IMR-90 (cell line): ENCODE measurements at regions of chr20 and their contacts with region 1.

Region 1: DNA sequence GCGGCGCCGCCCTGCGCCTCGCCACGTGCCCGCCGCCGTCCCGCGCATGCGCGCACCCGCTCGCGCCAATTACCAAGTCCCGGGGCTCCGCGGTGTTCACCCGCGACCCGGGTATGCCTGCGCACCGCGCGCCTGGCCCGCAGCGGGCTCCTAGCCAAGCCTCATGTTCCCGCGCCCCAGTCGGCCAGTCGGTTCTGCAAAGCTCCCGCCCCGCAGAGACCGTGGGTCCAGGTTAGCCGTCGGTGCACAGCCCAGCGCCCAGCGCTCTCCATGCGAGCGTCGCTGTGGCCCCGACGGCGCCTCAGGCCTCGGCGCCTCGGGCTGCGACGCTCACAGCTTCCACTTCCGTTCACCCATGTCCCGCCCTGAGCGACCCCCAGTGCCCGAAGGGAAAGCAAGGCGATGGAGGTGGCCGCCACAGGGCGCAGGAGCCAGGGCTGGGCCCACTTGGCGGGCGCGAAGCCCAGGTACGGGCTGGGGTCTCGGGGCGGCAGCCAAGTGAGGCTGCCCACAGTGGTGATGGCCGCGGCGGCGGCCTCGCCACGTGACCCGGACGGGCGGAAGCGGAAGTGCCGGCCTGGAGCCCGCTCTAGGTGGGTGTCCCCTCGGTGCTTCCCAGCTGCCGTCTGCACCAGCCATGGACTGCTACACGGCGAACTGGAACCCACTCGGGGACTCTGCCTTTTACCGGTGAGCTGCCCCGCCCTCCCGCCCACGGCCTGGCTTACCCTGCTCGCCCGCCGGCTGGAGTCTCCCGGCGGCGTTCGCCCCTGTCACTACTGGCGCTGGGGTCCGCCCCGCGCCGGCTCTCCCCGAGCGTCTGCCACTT is at the starts of genes PCED1A and VPS16:
- DNase-seq: peak; percentile 85
- ATAC-seq: peak; percentile 96
- H3K4me3 ChIP-seq: peak within 1 kb of the TSS; percentile 92
- H3K27ac ChIP-seq: peak within 1 kb of the TSS; percentile 93
- H3K4me1 ChIP-seq: peaks cover 8% of the 10 kb centered on the region
- H3K27me3 ChIP-seq: no peaks in the 10 kb centered on the region
- CTCF ChIP-seq: no peak
- POLR2A ChIP-seq: no peak
- RAD21 ChIP-seq: no peak
- total RNA-seq, gene PCED1A: 8.1 and 9.7 TPM in 2 replicates
- total RNA-seq, gene VPS16: 41.7 and 48.0 TPM in 2 replicates

Region 2: DNA sequence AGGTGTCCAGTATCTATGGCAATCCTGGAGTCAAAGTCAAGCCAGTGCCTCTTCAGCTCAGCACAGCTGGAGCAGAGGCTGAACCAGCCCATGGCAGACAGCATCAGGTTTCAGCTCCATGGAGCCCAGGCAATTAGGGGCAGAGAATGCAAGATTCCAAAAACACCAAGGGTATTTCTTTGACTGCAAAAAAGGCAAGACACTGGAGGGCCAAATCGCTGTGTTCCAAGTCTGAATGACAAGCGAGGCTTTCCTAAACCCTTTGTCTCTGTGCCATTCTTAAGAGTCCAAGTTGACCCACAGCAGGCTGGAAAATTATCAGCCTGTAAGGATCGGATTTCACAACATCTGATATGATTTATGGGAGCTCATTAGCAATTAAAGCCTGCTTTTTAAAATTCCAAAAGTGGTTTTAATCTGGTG is 594.3 kb before region 1 on chr20:
- CTCF ChIA-PET with region 1: no interaction called
- POLR2A ChIA-PET with region 1: no interaction called
- dilution Hi-C with region 1: no loop called
- in situ Hi-C with region 1: no loop called
- intact Hi-C with region 1: no loop called
- DNase-seq: no peak
- ATAC-seq: no peak
- H3K4me3 ChIP-seq: no peak overlapping the region
- H3K27ac ChIP-seq: no peak overlapping the region
- H3K4me1 ChIP-seq: no peaks in the 10 kb centered on the region
- H3K27me3 ChIP-seq: peaks cover 18% of the 10 kb centered on the region
- CTCF ChIP-seq: no peak
- POLR2A ChIP-seq: no peak
- RAD21 ChIP-seq: no peak

Region 3: DNA sequence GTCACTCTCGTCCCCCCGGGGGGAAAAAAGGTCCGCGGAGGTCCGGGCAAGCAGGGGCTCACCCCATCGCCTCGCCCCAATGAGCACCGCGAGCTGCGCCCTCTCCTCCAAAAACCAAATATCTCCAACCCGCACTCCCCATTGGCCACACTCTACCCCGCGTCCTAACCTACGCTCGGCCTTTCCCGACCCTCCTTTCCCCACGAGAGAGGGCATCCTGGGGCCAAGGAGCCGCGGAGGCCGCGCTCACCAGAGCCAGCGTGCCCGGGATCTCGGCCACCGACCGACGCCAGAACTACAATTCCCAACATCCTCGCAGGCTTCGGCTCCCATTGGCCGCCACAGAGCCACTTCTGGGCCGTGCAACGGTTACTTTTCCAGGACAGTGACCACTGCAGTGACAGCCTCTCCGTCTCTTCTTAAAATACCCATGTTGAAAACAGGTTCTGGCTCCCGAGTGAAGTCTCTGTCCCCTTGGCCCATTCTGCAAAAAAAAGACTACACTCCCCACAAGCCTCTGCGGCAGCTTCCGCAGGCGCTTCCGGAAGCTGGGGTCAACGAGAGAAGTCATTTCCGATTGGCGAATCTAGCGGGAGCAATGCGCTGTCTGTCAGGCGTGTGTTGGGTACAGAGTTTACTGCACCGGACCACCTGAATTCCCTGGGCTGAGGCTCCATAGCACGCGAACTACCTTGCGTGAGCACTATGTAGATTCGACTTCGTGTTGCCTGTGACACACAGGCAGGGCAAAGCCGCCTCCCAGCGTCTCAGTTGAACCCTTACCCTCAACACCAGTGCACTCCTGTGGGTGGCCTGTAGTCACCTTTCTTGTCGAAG is 331.5 kb before region 1 on chr20 and contains the start of gene ZNF343:
- CTCF ChIA-PET with region 1: no interaction called
- POLR2A ChIA-PET with region 1: no interaction called
- dilution Hi-C with region 1: no loop called
- in situ Hi-C with region 1: loop called (anchors 25 kb)
- intact Hi-C with region 1: no loop called
- DNase-seq: peak; percentile 77
- ATAC-seq: peak; percentile 95
- H3K4me3 ChIP-seq: peak within 1 kb of the TSS; percentile 77
- H3K27ac ChIP-seq: peak within 1 kb of the TSS; percentile 81
- H3K4me1 ChIP-seq: peaks cover 2% of the 10 kb centered on the region; the same call in 1 of the 2 replicates
- H3K27me3 ChIP-seq: no peaks in the 10 kb centered on the region
- CTCF ChIP-seq: no peak
- POLR2A ChIP-seq: no peak
- RAD21 ChIP-seq: no peak
- total RNA-seq, gene ZNF343: 18.9 and 26.2 TPM in 2 replicates

Region 4: GRCh38 chr20:2800521-2801285 is 39.6 kb before region 1 on chr20 and contains the start of gene CPXM1:
- CTCF ChIA-PET with region 1: no interaction called
- POLR2A ChIA-PET with region 1: no interaction called
- dilution Hi-C with region 1: no loop called
- in situ Hi-C with region 1: no loop called
- intact Hi-C with region 1: loop called (anchors 2 kb)
- DNase-seq: no peak
- ATAC-seq: peak; percentile 51
- H3K4me3 ChIP-seq: peak within 1 kb of the TSS; percentile 25
- H3K27ac ChIP-seq: peak within 1 kb of the TSS; percentile 32; the same call in 1 of the 2 replicates
- H3K4me1 ChIP-seq: peaks cover 2% of the 10 kb centered on the region; the same call in 1 of the 2 replicates
- H3K27me3 ChIP-seq: peaks cover 61% of the 10 kb centered on the region
- CTCF ChIP-seq: no peak
- POLR2A ChIP-seq: no peak
- RAD21 ChIP-seq: no peak
- total RNA-seq, gene CPXM1: 0.83 and 1.1 TPM in 2 replicates